ENCODE measurements at regions of chr3 and their contacts with region 1.

Region 1: GRCh38 chr3:47282424-47283192 is at the starts of genes KIF9 and KLHL18:
- DNase-seq: peak; percentile 94
- ATAC-seq: peak; percentile 82
- H3K4me3 ChIP-seq: peak within 1 kb of the TSS; percentile 91
- H3K27ac ChIP-seq: peak within 1 kb of the TSS; percentile 88
- H3K4me1 ChIP-seq: peaks cover 21% of the 10 kb centered on the region
- H3K27me3 ChIP-seq: no peaks in the 10 kb centered on the region
- CTCF ChIP-seq: no peak
- total RNA-seq, gene KIF9: 16.2 and 22.7 TPM in 2 replicates
- total RNA-seq, gene KLHL18: 28.6 and 36.5 TPM in 2 replicates

Region 2: DNA sequence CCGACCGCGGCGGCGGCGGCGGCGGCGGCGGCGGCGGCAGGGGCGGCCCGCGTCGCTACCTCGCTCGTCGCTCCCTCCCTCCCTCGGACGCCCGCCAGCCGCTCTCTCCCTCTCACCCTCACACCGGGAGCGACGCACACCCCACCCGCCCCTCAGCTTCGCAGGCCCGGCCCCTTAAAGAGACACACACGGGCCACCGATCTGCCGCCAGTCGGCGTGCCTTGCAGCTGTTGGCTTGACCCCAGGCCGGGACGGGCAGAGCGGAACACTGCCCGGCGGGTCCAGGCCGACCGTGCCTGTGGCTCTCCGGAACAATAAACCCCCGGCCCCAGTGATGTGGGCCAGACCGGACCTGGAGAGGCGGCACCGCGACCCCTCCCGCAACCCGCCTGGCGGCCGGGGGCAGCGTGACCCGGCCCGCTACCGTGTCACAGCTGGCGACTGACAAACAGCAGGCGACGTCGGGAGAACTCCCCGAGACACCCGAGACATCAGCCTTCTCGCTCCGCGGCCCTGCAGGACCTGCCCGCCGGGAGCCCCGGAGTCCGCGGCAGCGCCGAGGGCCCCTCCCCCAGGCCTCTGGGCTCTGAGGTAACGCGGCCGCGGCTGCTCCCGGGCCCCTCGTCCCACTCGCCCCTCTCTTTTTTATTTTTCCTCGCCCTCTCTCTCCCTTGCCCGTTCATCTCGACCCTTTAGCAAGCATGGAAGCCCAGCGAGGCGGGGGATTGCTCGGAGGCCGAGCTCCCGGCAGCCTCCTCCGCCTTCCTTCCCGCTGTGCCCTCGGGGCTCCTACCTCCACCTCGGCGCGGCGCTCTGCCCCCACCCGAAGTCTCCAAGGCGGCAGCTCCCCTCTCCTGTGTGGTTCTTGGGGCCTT is 118.4 kb before region 1 on chr3 and contains the start of gene SETD2:
- CTCF ChIA-PET with region 1: no interaction called
- POLR2A ChIA-PET with region 1: no interaction called
- intact Hi-C with region 1: loop called (anchors 10 kb)
- DNase-seq: peak; percentile 93
- ATAC-seq: peak; percentile 86
- H3K4me3 ChIP-seq: peak within 1 kb of the TSS; percentile 79
- H3K27ac ChIP-seq: peak within 1 kb of the TSS; percentile 55
- H3K4me1 ChIP-seq: peaks cover 15% of the 10 kb centered on the region
- H3K27me3 ChIP-seq: no peaks in the 10 kb centered on the region
- CTCF ChIP-seq: peak; percentile 49
- total RNA-seq, gene SETD2: 23.6 and 24.1 TPM in 2 replicates

Region 3: GRCh38 chr3:47324278-47324865 is 41.8 kb after region 1 on chr3:
- CTCF ChIA-PET with region 1: interaction called, 10 read pairs
- POLR2A ChIA-PET with region 1: no interaction called
- intact Hi-C with region 1: loop called (anchors 1 kb)
- DNase-seq: peak; percentile 90
- ATAC-seq: peak; percentile 80
- H3K4me3 ChIP-seq: no peak overlapping the region
- H3K27ac ChIP-seq: peak overlapping the region; percentile 63
- H3K4me1 ChIP-seq: peaks cover 14% of the 10 kb centered on the region
- H3K27me3 ChIP-seq: no peaks in the 10 kb centered on the region
- CTCF ChIP-seq: peak; percentile 80

Region 4: DNA sequence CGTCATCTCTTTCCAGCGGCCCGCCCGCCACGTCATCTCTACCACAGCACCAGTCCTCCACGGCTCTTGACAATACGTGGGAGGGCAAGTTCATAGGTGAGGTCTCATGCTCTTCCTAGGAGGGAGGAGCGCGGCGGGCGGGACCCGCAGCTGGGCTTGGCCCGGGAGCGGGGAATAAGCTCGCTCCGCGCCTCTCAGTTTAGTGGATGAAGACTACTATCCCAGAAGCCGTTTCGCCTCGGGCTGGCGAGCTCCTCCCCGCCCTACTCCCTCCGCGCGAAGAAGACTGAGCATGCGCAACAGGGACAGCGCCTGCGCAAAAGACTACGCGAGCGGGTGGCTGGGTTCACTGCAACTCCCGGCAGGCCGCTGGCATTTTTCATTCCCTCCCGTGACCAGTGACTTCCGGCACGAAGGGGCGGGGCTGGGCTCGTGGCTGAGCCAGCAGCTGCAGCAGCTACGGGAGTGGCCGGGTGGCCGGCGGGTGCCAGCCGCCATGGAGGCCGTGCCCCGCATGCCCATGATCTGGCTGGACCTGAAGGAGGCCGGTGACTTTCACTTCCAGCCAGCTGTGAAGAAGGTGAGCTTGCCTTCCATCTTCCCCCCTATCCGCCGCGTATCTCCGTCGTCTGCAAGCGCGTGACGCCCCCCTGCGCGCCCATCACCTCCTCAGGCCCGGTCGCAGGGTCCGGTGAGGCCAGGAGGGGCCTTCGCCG is 98.2 kb after region 1 on chr3 and contains the start of gene PTPN23:
- CTCF ChIA-PET with region 1: no interaction called
- POLR2A ChIA-PET with region 1: no interaction called
- intact Hi-C with region 1: loop called (anchors 10 kb)
- DNase-seq: peak; percentile 99
- ATAC-seq: peak; percentile 79
- H3K4me3 ChIP-seq: peak within 1 kb of the TSS; percentile 77
- H3K27ac ChIP-seq: peak within 1 kb of the TSS; percentile 86
- H3K4me1 ChIP-seq: peaks cover 31% of the 10 kb centered on the region
- H3K27me3 ChIP-seq: no peaks in the 10 kb centered on the region
- CTCF ChIP-seq: no peak
- total RNA-seq, gene PTPN23: 22.3 and 28.7 TPM in 2 replicates

Region 5: DNA sequence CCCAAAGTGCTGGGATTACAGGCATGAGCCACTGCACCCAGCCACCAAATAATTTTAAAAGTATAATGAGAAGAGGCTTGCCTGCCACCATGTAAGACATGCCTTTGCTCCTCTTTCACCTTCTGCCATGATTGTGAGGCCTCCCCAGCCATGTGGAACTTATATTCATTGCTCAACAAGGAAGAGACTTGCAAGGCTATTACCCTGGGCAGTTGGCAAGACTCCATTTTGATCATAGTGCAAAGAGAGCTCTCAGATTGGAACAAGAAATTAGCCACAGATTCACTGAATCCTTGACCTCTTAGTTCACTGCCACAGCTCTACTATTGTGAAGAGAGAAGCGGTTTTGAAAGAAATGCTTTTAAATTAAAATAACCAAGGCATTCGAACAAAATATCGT is 187.0 kb after region 1 on chr3:
- CTCF ChIA-PET with region 1: no interaction called
- POLR2A ChIA-PET with region 1: no interaction called
- intact Hi-C with region 1: loop called (anchors 5 kb)
- DNase-seq: no peak
- ATAC-seq: no peak
- H3K4me3 ChIP-seq: no peak overlapping the region
- H3K27ac ChIP-seq: no peak overlapping the region
- H3K4me1 ChIP-seq: peaks cover 8% of the 10 kb centered on the region
- H3K27me3 ChIP-seq: no peaks in the 10 kb centered on the region
- CTCF ChIP-seq: no peak

Measured in PC-3 (cell line).